CD4-positive, alpha-beta T cell (primary cell): ENCODE measurements at regions of chr13 and their contacts with region 1.

Region 1: DNA sequence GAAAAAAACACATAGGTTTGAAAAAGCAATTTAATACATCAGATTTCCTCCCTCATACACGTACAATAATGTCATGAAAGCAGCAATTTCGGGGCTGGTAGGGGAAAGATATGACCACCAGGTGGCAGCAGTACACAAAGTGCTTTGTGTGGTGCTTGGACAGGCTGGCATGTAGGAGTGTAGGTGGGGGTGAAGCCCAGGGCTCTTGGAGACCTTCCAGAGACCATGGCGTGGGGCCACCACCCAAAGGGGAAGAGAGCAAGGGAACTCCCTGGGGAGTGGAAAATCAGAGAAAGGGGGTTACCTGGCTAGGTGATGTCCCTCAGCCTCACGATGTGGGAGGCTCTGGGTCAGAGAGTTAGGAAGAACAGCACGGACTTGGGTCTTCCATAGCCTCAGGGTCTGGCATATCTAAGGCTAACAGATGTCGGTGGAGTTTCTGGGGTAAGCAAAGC is 11.8 kb upstream of the CCNA1 start:
- DNase-seq: peak; percentile 28 to 72 (median 38)
- ATAC-seq: peak; percentile 56
- H3K4me3 ChIP-seq: no peak overlapping the region
- H3K4me3 Mint-ChIP-seq: no peak overlapping the region
- H3K27ac ChIP-seq: no peak overlapping the region
- H3K27ac Mint-ChIP-seq: no peak overlapping the region
- H3K4me1 ChIP-seq: no peaks in the 10 kb centered on the region
- H3K4me1 Mint-ChIP-seq: no peaks in the 10 kb centered on the region
- H3K27me3 ChIP-seq: peaks cover 0 to 14% of the 10 kb centered on the region in 2 experiments
- H3K27me3 Mint-ChIP-seq: peaks cover 62% of the 10 kb centered on the region
- CTCF ChIP-seq: peak; percentile 72

Region 2: GRCh38 chr13:36981156-36981743 is 560.8 kb after region 1 on chr13:
- CTCF ChIA-PET with region 1: no interaction called
- POLR2A ChIA-PET with region 1: no interaction called
- intact Hi-C with region 1: loop called (anchors 5 kb)
- DNase-seq: peak in 3 of 14 experiments; percentile 23 to 30 (median 29)
- ATAC-seq: no peak
- H3K4me3 ChIP-seq: no peak overlapping the region
- H3K4me3 Mint-ChIP-seq: no peak overlapping the region
- H3K27ac ChIP-seq: no peak overlapping the region
- H3K27ac Mint-ChIP-seq: no peak overlapping the region
- H3K4me1 ChIP-seq: no peaks in the 10 kb centered on the region
- H3K4me1 Mint-ChIP-seq: no peaks in the 10 kb centered on the region
- H3K27me3 ChIP-seq: no peaks in the 10 kb centered on the region
- H3K27me3 Mint-ChIP-seq: no peaks in the 10 kb centered on the region
- CTCF ChIP-seq: peak; percentile 25

Region 3: GRCh38 chr13:36986462-36987240 is 566.2 kb after region 1 on chr13:
- CTCF ChIA-PET with region 1: no interaction called
- POLR2A ChIA-PET with region 1: no interaction called
- intact Hi-C with region 1: loop called (anchors 5 kb)
- DNase-seq: no peak
- ATAC-seq: no peak
- H3K4me3 ChIP-seq: no peak overlapping the region
- H3K4me3 Mint-ChIP-seq: no peak overlapping the region
- H3K27ac ChIP-seq: no peak overlapping the region
- H3K27ac Mint-ChIP-seq: no peak overlapping the region
- H3K4me1 ChIP-seq: no peaks in the 10 kb centered on the region
- H3K4me1 Mint-ChIP-seq: no peaks in the 10 kb centered on the region
- H3K27me3 ChIP-seq: no peaks in the 10 kb centered on the region
- H3K27me3 Mint-ChIP-seq: no peaks in the 10 kb centered on the region
- CTCF ChIP-seq: no peak

Region 4: DNA sequence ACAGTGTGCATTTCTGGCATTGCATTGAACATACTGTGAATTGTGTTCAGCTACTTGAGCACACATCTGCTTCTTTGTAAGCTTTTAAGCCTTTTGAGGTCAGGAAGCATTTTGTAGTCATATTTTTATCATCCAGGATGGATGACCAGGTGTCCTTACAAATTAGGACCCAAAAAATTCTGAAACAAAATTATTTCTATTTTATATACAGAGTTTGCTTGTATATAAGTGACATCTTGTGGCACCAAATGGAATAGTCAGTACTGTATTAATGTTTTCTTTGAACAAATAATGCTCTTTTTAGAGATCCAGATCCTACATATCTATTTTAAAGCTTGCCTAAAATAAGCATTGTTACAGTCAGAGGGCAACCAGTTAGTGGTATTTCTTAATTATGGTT is 648.5 kb after region 1 on chr13:
- CTCF ChIA-PET with region 1: no interaction called
- POLR2A ChIA-PET with region 1: no interaction called
- intact Hi-C with region 1: loop called (anchors 5 to 10 kb)
- DNase-seq: no peak
- ATAC-seq: no peak
- H3K4me3 ChIP-seq: no peak overlapping the region
- H3K4me3 Mint-ChIP-seq: no peak overlapping the region
- H3K27ac ChIP-seq: no peak overlapping the region
- H3K27ac Mint-ChIP-seq: no peak overlapping the region
- H3K4me1 ChIP-seq: no peaks in the 10 kb centered on the region
- H3K4me1 Mint-ChIP-seq: no peaks in the 10 kb centered on the region
- H3K27me3 ChIP-seq: no peaks in the 10 kb centered on the region
- H3K27me3 Mint-ChIP-seq: peaks cover 12% of the 10 kb centered on the region
- CTCF ChIP-seq: no peak

Region 5: DNA sequence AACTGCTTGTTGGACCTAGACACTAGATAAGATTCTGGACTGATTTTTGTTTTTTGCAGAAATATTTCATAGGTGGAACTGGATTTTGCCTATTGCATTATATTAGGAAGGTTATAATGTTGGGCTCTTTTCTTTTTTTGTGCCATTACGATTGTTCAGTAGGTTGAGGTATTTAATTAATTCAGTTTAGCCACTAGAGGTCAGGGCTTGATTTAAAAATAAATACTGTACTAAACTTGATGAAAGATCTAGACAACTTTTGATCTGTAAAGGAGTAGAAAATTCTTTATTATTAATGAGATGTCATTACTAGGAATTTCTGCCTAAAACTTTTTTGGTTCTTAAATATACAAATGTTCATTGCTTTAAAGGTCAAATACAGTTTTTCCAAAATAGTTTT is 654.2 kb after region 1 on chr13:
- CTCF ChIA-PET with region 1: no interaction called
- POLR2A ChIA-PET with region 1: no interaction called
- intact Hi-C with region 1: loop called (anchors 5 to 10 kb)
- DNase-seq: peak in 2 of 14 experiments; percentile 23 to 36
- ATAC-seq: no peak
- H3K4me3 ChIP-seq: no peak overlapping the region
- H3K4me3 Mint-ChIP-seq: no peak overlapping the region
- H3K27ac ChIP-seq: no peak overlapping the region
- H3K27ac Mint-ChIP-seq: no peak overlapping the region
- H3K4me1 ChIP-seq: no peaks in the 10 kb centered on the region
- H3K4me1 Mint-ChIP-seq: no peaks in the 10 kb centered on the region
- H3K27me3 ChIP-seq: no peaks in the 10 kb centered on the region
- H3K27me3 Mint-ChIP-seq: peaks cover 8% of the 10 kb centered on the region
- CTCF ChIP-seq: peak; percentile 54

Region 6: DNA sequence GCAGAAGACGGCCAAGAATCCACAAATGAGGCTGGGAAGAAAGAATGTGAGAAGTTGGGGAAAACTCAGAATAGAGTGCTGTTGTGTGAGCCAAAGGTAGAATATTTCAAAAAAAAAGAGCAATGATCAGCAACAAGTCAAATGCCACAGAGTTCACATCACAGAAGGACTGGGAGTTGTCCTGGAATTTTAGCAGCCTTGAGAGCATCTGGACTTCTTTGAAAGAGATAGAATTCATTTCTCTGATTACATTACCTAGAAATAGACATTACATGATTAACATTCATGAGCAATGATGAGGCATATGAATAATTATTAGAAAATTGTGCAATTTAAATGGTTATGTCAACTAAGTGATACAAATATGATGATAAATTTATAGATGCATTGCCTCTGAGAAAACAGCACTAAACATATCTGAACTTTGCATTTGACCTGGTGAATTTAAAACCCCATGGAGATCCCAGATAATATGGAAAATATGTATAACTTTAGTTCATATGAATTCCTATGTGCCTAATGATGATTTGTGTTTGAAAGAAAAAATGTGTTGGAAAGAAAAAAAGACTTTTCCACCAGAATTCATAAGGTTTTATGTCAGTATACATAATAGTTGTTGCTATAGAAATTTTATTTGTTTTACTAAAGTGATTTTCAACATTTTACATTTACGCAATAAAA is 991.9 kb after region 1 on chr13:
- CTCF ChIA-PET with region 1: no interaction called
- POLR2A ChIA-PET with region 1: no interaction called
- intact Hi-C with region 1: no loop called
- DNase-seq: no peak
- ATAC-seq: no peak
- H3K4me3 ChIP-seq: no peak overlapping the region
- H3K4me3 Mint-ChIP-seq: no peak overlapping the region
- H3K27ac ChIP-seq: no peak overlapping the region
- H3K27ac Mint-ChIP-seq: no peak overlapping the region
- H3K4me1 ChIP-seq: no peaks in the 10 kb centered on the region
- H3K4me1 Mint-ChIP-seq: no peaks in the 10 kb centered on the region
- H3K27me3 ChIP-seq: no peaks in the 10 kb centered on the region
- H3K27me3 Mint-ChIP-seq: no peaks in the 10 kb centered on the region
- CTCF ChIP-seq: no peak